Activated CD4-positive, alpha-beta memory T cell treated with anti-CD3 and anti-CD28 coated beads for 36 hours (primary cell): ENCODE measurements at regions of chr13 and their contacts with region 1.

Region 1: GRCh38 chr13:36420437-36420891 is 11.8 kb upstream of the CCNA1 start:
- DNase-seq: peak; percentile 79
- H3K4me3 Mint-ChIP-seq: no peak overlapping the region
- H3K27ac Mint-ChIP-seq: peak overlapping the region; percentile 21
- H3K4me1 Mint-ChIP-seq: peaks cover 21% of the 10 kb centered on the region
- H3K27me3 Mint-ChIP-seq: peaks cover 43% of the 10 kb centered on the region

Region 2: DNA sequence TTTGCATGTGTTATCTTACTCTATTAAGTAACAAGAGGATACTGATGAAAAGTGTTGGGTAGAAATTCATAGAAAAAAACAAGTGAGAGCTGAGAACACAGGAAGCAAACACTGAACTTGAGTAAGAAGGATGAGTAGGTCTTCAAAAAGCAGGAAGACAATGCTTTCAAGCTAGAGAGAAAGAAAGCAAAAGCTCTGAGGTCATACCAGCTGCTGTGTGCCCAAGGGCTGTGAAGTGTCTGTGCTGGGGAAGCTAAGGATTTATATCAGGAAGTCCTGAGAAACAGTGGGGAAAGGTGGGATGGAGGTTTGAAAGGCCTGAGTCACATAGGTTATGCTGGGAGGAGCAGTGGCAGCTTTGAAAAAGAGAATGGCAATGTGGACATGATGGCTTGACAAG is 798.5 kb before region 1 on chr13:
- CTCF ChIA-PET with region 1: no interaction called
- POLR2A ChIA-PET with region 1: no interaction called
- intact Hi-C with region 1: no loop called
- DNase-seq: no peak
- H3K4me3 Mint-ChIP-seq: no peak overlapping the region
- H3K27ac Mint-ChIP-seq: no peak overlapping the region
- H3K4me1 Mint-ChIP-seq: no peaks in the 10 kb centered on the region
- H3K27me3 Mint-ChIP-seq: no peaks in the 10 kb centered on the region

Region 3: DNA sequence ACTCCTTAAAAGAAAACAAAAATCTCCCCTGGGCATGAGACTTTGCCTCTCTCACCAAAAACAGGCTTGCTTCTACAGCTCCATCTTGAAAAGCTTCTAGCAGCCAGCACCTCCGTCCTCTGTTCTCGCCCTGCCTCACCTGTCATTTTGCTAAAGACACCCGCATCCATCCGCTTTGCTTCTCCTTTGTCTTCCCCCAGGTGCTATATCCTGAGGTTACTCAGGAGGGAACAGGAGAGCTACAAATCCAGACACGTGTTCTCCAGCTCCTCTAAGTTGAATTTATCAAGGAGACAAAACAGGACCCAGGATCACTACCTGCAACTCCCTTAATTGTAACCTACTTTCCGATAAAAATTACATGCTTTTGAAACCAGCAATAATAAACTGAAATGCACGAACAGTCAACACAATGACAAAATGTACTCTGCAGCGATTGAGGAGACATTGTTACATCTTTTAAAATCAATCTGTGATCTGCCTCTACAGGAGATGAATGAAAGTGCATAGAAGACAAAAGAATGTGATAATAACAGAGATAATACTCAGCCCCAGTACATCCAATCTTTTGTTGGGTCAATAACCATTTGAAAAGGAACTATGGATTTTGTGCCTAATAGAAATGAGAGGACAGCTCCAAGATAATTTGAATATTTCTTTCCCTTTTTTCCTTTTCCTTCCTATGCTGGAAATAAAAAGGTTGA is 510.5 kb before region 1 on chr13:
- CTCF ChIA-PET with region 1: no interaction called
- POLR2A ChIA-PET with region 1: no interaction called
- intact Hi-C with region 1: no loop called
- DNase-seq: no peak
- H3K4me3 Mint-ChIP-seq: no peak overlapping the region
- H3K27ac Mint-ChIP-seq: no peak overlapping the region
- H3K4me1 Mint-ChIP-seq: no peaks in the 10 kb centered on the region
- H3K27me3 Mint-ChIP-seq: no peaks in the 10 kb centered on the region

Region 4: DNA sequence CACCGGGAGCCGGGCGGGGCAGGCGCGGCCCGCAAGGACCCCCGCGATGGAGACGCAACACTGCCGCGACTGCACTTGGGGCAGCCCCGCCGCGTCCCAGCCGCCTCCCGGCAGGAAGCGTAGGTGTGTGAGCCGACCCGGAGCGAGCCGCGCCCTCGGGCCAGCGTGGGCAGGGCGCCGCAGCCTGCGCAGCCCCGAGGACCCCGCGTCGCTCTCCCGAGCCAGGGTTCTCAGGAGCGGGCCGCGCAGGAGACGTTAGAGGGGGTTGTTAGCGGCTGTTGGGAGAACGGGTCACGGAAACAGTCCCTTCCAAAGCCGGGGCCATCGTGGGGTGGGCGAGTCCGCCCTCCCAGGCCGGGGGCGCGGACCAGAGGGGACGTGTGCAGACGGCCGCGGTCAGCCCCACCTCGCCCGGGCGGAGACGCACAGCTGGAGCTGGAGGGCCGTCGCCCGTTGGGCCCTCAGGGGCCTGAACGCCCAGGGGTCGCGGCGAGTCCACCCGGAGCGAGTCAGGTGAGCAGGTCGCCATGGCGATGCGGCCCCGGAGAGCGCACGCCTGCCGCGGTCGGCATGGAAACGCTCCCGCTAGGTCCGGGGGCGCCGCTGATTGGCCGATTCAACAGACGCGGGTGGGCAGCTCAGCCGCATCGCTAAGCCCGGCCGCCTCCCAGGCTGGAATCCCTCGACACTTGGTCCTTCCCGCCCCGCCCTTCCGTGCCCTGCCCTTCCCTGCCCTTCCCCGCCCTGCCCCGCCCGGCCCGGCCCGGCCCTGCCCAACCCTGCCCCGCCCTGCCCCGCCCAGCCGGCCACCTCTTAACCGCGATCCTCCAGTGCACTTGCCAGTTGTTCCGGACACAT is 11.4 kb after region 1 on chr13 and contains the start of gene CCNA1:
- CTCF ChIA-PET with region 1: interaction called, 4 read pairs
- POLR2A ChIA-PET with region 1: no interaction called
- intact Hi-C with region 1: loop called (anchors 1 kb)
- DNase-seq: peak; percentile 44
- H3K4me3 Mint-ChIP-seq: peak within 1 kb of the TSS; percentile 31
- H3K27ac Mint-ChIP-seq: no peak within 1 kb of the TSS
- H3K4me1 Mint-ChIP-seq: peaks cover 8% of the 10 kb centered on the region
- H3K27me3 Mint-ChIP-seq: peaks cover 46% of the 10 kb centered on the region
- total RNA-seq, gene CCNA1: 0.62 to 0.87 TPM